T-cell (primary cell): ENCODE measurements at regions of chr11 and their contacts with region 1.

Region 1: GRCh38 chr11:18710545-18710944 is 12.0 kb downstream of the TMEM86A start:
- DNase-seq: no peak
- ATAC-seq: no peak
- H3K4me3 ChIP-seq: no peak overlapping the region
- H3K4me3 Mint-ChIP-seq: no peak overlapping the region
- H3K27ac ChIP-seq: no peak overlapping the region
- H3K27ac Mint-ChIP-seq: no peak overlapping the region
- H3K4me1 ChIP-seq: peaks cover 0 to 16% of the 10 kb centered on the region in 2 experiments
- H3K4me1 Mint-ChIP-seq: peaks cover 12 to 14% (median 13%) of the 10 kb centered on the region in 3 donors
- H3K27me3 ChIP-seq: peaks cover 0 to 17% of the 10 kb centered on the region in 2 experiments
- H3K27me3 Mint-ChIP-seq: no peaks in the 10 kb centered on the region

Region 2: DNA sequence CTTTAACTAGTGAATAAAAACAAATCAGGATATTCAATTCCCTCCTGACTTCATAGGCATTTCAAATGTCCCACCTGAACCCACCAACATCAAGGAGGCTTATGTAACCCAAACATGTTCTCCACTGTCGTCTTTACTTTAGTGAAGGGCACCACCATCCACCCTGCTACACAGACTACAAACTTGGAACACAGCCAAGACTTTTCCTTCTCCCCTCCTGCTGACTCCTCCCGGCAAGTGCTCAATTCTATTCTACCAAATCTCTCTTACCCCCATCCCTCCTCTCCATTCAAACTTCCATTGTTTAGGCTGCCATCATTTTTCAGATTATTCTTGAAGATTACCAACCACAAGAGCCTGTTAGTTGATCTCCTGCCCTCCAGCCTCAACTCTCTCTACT is 629.0 kb before region 1 on chr11:
- CTCF ChIA-PET with region 1: no interaction called
- POLR2A ChIA-PET with region 1: interaction called in 1 of 2 experiments, 16 read pairs
- DNase-seq: no peak
- ATAC-seq: no peak
- H3K4me3 ChIP-seq: no peak overlapping the region
- H3K4me3 Mint-ChIP-seq: no peak overlapping the region
- H3K27ac ChIP-seq: no peak overlapping the region
- H3K27ac Mint-ChIP-seq: peak overlapping the region; percentile 10 to 44
- H3K4me1 ChIP-seq: no peaks in the 10 kb centered on the region
- H3K4me1 Mint-ChIP-seq: no peaks in the 10 kb centered on the region
- H3K27me3 ChIP-seq: no peaks in the 10 kb centered on the region
- H3K27me3 Mint-ChIP-seq: no peaks in the 10 kb centered on the region

Region 3: GRCh38 chr11:18594999-18595749 is 115.4 kb before region 1 on chr11:
- CTCF ChIA-PET with region 1: no interaction called
- POLR2A ChIA-PET with region 1: no interaction called
- DNase-seq: no peak
- ATAC-seq: no peak
- H3K4me3 ChIP-seq: no peak overlapping the region
- H3K4me3 Mint-ChIP-seq: no peak overlapping the region
- H3K27ac ChIP-seq: no peak overlapping the region
- H3K27ac Mint-ChIP-seq: no peak overlapping the region
- H3K4me1 ChIP-seq: peaks cover 0 to 2% of the 10 kb centered on the region in 2 experiments
- H3K4me1 Mint-ChIP-seq: peaks cover 0 to 10% (median 3%) of the 10 kb centered on the region in 3 donors
- H3K27me3 ChIP-seq: no peaks in the 10 kb centered on the region
- H3K27me3 Mint-ChIP-seq: no peaks in the 10 kb centered on the region

Region 4: GRCh38 chr11:18696638-18697225 is 13.8 kb before region 1 on chr11:
- CTCF ChIA-PET with region 1: no interaction called
- POLR2A ChIA-PET with region 1: no interaction called
- DNase-seq: no peak
- ATAC-seq: no peak
- H3K4me3 ChIP-seq: no peak overlapping the region
- H3K4me3 Mint-ChIP-seq: no peak overlapping the region
- H3K27ac ChIP-seq: no peak overlapping the region
- H3K27ac Mint-ChIP-seq: no peak overlapping the region
- H3K4me1 ChIP-seq: peaks cover 2 to 15% of the 10 kb centered on the region in 2 experiments
- H3K4me1 Mint-ChIP-seq: peaks cover 17 to 20% (median 20%) of the 10 kb centered on the region in 3 donors
- H3K27me3 ChIP-seq: peaks cover 0 to 17% of the 10 kb centered on the region in 2 experiments
- H3K27me3 Mint-ChIP-seq: peaks cover 0 to 3% of the 10 kb centered on the region in 2 donors

Region 5: GRCh38 chr11:18741783-18742182 is 31.2 kb after region 1 on chr11:
- CTCF ChIA-PET with region 1: no interaction called
- POLR2A ChIA-PET with region 1: no interaction called
- DNase-seq: no peak
- ATAC-seq: no peak
- H3K4me3 ChIP-seq: no peak overlapping the region
- H3K4me3 Mint-ChIP-seq: no peak overlapping the region
- H3K27ac ChIP-seq: no peak overlapping the region
- H3K27ac Mint-ChIP-seq: no peak overlapping the region
- H3K4me1 ChIP-seq: no peaks in the 10 kb centered on the region
- H3K4me1 Mint-ChIP-seq: no peaks in the 10 kb centered on the region
- H3K27me3 ChIP-seq: peaks cover 0 to 14% of the 10 kb centered on the region in 2 experiments
- H3K27me3 Mint-ChIP-seq: peaks cover 0 to 2% of the 10 kb centered on the region in 2 donors

Region 6: GRCh38 chr11:18878211-18878610 is 167.7 kb after region 1 on chr11:
- CTCF ChIA-PET with region 1: no interaction called
- POLR2A ChIA-PET with region 1: no interaction called
- DNase-seq: no peak
- ATAC-seq: no peak
- H3K4me3 ChIP-seq: no peak overlapping the region
- H3K4me3 Mint-ChIP-seq: no peak overlapping the region
- H3K27ac ChIP-seq: no peak overlapping the region
- H3K27ac Mint-ChIP-seq: no peak overlapping the region
- H3K4me1 ChIP-seq: no peaks in the 10 kb centered on the region
- H3K4me1 Mint-ChIP-seq: no peaks in the 10 kb centered on the region
- H3K27me3 ChIP-seq: peaks cover 2 to 4% of the 10 kb centered on the region in 2 experiments
- H3K27me3 Mint-ChIP-seq: peaks cover 19 to 26% of the 10 kb centered on the region in 2 donors